ENCODE measurements at regions of chr11 and their contacts with region 1.

Region 1: GRCh38 chr11:337711-338110 is 17.1 kb upstream of the IFITM3 start:
- DNase-seq: no peak
- H3K4me3 ChIP-seq: no peak overlapping the region
- H3K4me3 Mint-ChIP-seq: no peak overlapping the region
- H3K27ac ChIP-seq: no peak overlapping the region
- H3K27ac Mint-ChIP-seq: no peak overlapping the region
- H3K4me1 ChIP-seq: peaks cover 22% of the 10 kb centered on the region
- H3K4me1 Mint-ChIP-seq: peaks cover 14 to 24% (median 17%) of the 10 kb centered on the region in 3 donors
- H3K27me3 ChIP-seq: no peaks in the 10 kb centered on the region
- H3K27me3 Mint-ChIP-seq: peaks cover 0 to 3% of the 10 kb centered on the region in 2 donors

Region 2: DNA sequence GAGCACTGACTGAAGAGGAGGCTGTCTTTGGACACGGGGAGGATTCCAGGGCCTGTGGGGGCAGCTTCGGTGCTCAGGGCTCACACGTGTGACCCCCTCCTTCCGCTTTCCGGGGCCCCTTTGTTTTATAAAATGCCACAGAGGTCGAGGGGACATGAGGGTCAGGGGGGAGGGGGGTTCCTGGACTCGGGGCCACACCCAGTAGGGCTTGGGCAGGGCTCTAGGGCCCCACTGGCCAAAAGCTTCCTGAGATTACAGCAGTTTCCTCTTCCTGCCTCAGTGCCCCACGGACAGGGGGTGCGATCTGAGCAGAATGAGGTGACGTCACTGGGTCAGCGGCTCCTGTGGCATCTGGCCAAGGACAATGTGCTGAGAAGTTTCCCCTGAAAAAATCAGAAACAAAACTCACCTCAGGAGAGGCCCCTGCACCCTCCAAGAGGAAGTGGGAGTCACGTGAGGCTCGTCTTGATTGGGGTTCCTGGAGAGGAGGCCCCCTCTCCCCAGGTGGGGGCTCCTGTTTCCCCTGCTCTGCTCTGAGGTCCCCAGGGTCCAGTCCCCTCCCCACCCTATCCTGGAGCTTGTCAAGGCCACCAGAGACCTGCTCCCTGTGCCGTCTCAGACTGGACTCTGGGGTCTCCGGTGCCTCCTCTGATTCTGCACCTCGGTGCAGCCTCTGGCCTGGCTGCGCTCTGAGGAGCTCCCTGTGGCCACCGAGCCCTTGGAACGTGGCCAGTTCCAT is 10.7 kb before region 1 on chr11:
- CTCF ChIA-PET with region 1: interaction called, 11 read pairs
- POLR2A ChIA-PET with region 1: interaction called, 5 read pairs
- DNase-seq: peak; percentile 48 to 86 (median 77)
- H3K4me3 ChIP-seq: peak overlapping the region; percentile 55
- H3K4me3 Mint-ChIP-seq: peak overlapping the region; percentile 27 to 81 (median 73)
- H3K27ac ChIP-seq: peak overlapping the region; percentile 78
- H3K27ac Mint-ChIP-seq: peak overlapping the region; percentile 90 to 99 (median 95)
- H3K4me1 ChIP-seq: peaks cover 61% of the 10 kb centered on the region
- H3K4me1 Mint-ChIP-seq: peaks cover 62 to 73% (median 64%) of the 10 kb centered on the region in 3 donors
- H3K27me3 ChIP-seq: no peaks in the 10 kb centered on the region
- H3K27me3 Mint-ChIP-seq: no peaks in the 10 kb centered on the region

Region 3: GRCh38 chr11:355581-356458 is 18.1 kb after region 1 on chr11:
- CTCF ChIA-PET with region 1: interaction called, 25 read pairs
- POLR2A ChIA-PET with region 1: interaction called, 4 read pairs
- DNase-seq: peak; percentile 75 to 90 (median 84)
- H3K4me3 ChIP-seq: peak overlapping the region; percentile 84
- H3K4me3 Mint-ChIP-seq: peak overlapping the region; percentile 63 to 85 (median 81)
- H3K27ac ChIP-seq: peak overlapping the region; percentile 82
- H3K27ac Mint-ChIP-seq: peak overlapping the region; percentile 78 to 99 (median 94)
- H3K4me1 ChIP-seq: peaks cover 25% of the 10 kb centered on the region
- H3K4me1 Mint-ChIP-seq: peaks cover 47 to 49% (median 48%) of the 10 kb centered on the region in 3 donors
- H3K27me3 ChIP-seq: no peaks in the 10 kb centered on the region
- H3K27me3 Mint-ChIP-seq: no peaks in the 10 kb centered on the region